Heart left ventricle (tissue), 16 donors: ENCODE measurements at regions of chr4 and their contacts with region 1.

Region 1: GRCh38 chr4:183407128-183407585 is 37.3 kb upstream of the CDKN2AIP start:
- DNase-seq: peak; percentile 77 to 94 (median 81)
- ATAC-seq: peak; percentile 87 to 94 (median 90)
- H3K4me3 ChIP-seq: peak overlapping the region; percentile 6 to 62 (median 44)
- H3K27ac ChIP-seq: peak overlapping the region in 8 of 12 donors; percentile 5 to 75 (median 34)
- H3K4me1 ChIP-seq: peaks cover 0 to 9% (median 0%) of the 10 kb centered on the region in 12 donors
- H3K27me3 ChIP-seq: no peaks in the 10 kb centered on the region
- CTCF ChIP-seq: peak; percentile 88 to 99 (median 96)
- POLR2A ChIP-seq: no peak

Region 2: GRCh38 chr4:182938205-182938645 is 468.9 kb before region 1 on chr4:
- intact Hi-C with region 1: loop called in 3 of 10 experiments (anchors 2 to 10 kb)
- DNase-seq: peak; percentile 63 to 85 (median 71)
- ATAC-seq: peak; percentile 86 to 99 (median 98)
- H3K4me3 ChIP-seq: no peak overlapping the region
- H3K27ac ChIP-seq: no peak overlapping the region
- H3K4me1 ChIP-seq: no peaks in the 10 kb centered on the region
- H3K27me3 ChIP-seq: no peaks in the 10 kb centered on the region
- CTCF ChIP-seq: peak; percentile 79 to 96 (median 92)
- POLR2A ChIP-seq: no peak

Region 3: GRCh38 chr4:183074296-183074990 is 332.7 kb before region 1 on chr4:
- intact Hi-C with region 1: loop called in 3 of 10 experiments (anchors 5 to 10 kb)
- DNase-seq: no peak
- ATAC-seq: no peak
- H3K4me3 ChIP-seq: no peak overlapping the region
- H3K27ac ChIP-seq: no peak overlapping the region
- H3K4me1 ChIP-seq: peaks cover 0 to 8% (median 0%) of the 10 kb centered on the region in 12 donors
- H3K27me3 ChIP-seq: no peaks in the 10 kb centered on the region
- CTCF ChIP-seq: no peak
- POLR2A ChIP-seq: no peak

Region 4: DNA sequence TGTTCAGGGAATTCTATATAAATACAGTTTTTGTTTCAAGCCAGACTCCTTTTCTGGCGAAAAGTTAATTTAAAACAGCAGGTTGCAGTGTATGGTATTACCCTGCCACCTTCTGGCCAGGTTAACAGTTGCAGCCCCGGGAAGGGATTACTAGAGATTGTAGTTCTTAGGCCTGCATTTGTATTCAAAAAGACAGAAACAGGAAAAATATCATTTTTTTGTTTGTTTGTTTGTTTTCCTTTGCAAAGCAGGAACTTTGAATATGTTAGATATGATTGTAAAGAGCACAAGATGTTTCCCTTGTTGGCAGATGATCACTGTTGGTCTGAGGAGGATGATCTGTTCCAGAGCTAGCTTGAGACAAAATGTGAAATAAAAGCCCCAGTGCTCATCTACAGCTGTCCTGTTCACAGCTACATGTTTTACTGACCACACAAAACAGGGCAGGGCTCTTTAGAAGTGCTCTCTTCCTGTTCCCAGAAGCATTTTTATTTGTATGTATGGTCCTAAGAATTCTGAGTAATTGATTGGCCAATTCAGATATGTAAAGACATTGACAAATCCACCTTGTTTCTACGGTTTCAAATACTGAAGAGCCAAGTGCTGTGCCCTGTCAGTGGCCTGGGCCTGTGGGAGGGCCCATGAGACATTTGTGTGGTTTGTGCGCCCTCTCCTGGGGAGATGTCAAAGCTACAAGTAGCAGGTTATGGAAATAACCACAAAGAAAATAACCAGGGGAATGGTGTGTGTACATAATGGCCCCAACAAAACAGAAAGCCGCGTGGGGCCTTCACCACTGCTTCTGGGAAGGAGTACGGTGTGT is 145.0 kb before region 1 on chr4:
- intact Hi-C with region 1: loop called in 1 of 10 experiments (anchors 2 kb)
- DNase-seq: peak; percentile 74 to 80 (median 77)
- ATAC-seq: peak; percentile 82 to 96 (median 93)
- H3K4me3 ChIP-seq: no peak overlapping the region
- H3K27ac ChIP-seq: peak overlapping the region in 6 of 12 donors; percentile 3 to 55 (median 36)
- H3K4me1 ChIP-seq: peaks cover 0 to 10% (median 4%) of the 10 kb centered on the region in 12 donors
- H3K27me3 ChIP-seq: no peaks in the 10 kb centered on the region
- CTCF ChIP-seq: peak; percentile 68 to 81 (median 72)
- POLR2A ChIP-seq: no peak

Region 5: DNA sequence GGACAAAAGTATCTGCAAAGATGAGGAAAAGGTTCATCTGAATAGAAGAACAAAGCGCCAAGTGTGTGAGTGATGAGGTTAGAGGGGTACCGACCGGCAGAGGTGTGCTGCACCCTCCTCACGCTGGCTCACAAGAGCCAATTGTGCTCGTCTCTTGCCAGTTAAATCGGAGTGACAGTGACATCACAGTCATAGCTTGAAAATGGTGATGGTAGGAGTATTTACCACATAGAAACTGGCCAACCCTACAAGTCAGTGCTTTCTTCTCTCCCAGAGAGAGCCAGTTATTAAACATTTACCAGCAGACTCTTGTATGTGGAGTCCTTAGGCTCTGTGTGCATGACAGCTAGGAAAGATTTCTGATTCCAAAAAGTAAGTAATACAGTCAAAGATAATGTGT is 119.5 kb before region 1 on chr4:
- intact Hi-C with region 1: loop called in 1 of 10 experiments (anchors 10 kb)
- DNase-seq: no peak
- ATAC-seq: no peak
- H3K4me3 ChIP-seq: no peak overlapping the region
- H3K27ac ChIP-seq: no peak overlapping the region
- H3K4me1 ChIP-seq: no peaks in the 10 kb centered on the region
- H3K27me3 ChIP-seq: no peaks in the 10 kb centered on the region
- CTCF ChIP-seq: no peak
- POLR2A ChIP-seq: no peak

Region 6: GRCh38 chr4:183318656-183319055 is 88.5 kb before region 1 on chr4:
- intact Hi-C with region 1: loop called in 1 of 10 experiments (anchors 10 kb)
- DNase-seq: peak in 1 of 5 donors; percentile 32
- ATAC-seq: no peak
- H3K4me3 ChIP-seq: no peak overlapping the region
- H3K27ac ChIP-seq: no peak overlapping the region
- H3K4me1 ChIP-seq: no peaks in the 10 kb centered on the region
- H3K27me3 ChIP-seq: no peaks in the 10 kb centered on the region
- CTCF ChIP-seq: no peak
- POLR2A ChIP-seq: no peak